WTC11 (cell line): ENCODE measurements at regions of chr19 and their contacts with region 1.

Region 1: DNA sequence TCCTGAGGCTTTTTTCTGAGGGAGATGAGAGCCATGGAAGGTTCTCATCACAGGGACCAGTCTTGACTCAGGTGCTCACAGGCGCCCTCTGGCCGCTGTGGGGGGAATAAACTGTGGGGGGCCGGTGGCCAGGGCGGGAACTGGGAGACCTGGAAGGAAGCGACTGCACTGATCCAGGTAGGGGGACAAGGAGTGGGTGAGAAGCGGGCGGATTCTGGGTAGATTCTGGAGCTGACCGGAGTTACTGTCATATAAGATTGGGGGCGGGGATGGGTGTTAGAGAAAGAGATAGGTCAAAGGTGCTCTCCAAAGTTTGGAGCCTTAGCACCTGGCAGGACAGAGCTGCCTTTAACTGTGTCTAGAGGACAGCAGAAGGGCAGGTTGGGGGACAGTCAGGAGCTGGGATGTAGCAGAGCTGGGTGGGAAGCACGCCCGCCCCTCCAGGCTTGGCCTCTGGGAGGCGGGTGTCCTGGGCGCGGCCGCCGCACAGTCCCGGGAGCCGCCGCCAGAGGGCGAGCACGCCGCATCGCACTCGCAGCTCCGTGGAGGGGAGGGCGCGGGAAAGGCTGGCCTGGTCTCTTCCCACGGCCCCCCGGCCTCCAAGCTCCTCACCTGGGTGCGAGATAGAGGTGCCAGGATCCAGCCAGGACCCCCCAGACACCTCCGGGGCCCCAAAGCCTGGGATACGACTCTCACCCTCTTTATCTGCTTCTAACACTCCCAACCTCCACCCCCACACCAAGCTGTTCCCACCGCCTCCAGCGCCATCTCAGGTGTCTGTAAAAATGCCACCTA is 4.2 kb upstream of the DAND5 start:
- DNase-seq: peak; percentile 91
- ATAC-seq: peak; percentile 95
- H3K4me3 Mint-ChIP-seq: peak overlapping the region; percentile 71
- H3K27ac Mint-ChIP-seq: peak overlapping the region; percentile 65
- H3K4me1 Mint-ChIP-seq: 0 out of 2 replicates have a peak, but pooled peaks cover 5% of the 10 kb centered on the region
- H3K27me3 Mint-ChIP-seq: peaks cover 14% of the 10 kb centered on the region
- CTCF ChIP-seq: peak; percentile 85

Region 2: GRCh38 chr19:12751635-12752034 is 213.6 kb before region 1 on chr19 and contains the start of gene BEST2:
- CTCF ChIA-PET with region 1: no interaction called
- POLR2A ChIA-PET with region 1: no interaction called
- DNase-seq: peak; percentile 61
- ATAC-seq: peak; percentile 74
- H3K4me3 Mint-ChIP-seq: peak within 1 kb of the TSS; percentile 69
- H3K27ac Mint-ChIP-seq: no peak within 1 kb of the TSS
- H3K4me1 Mint-ChIP-seq: peaks cover 13% of the 10 kb centered on the region
- H3K27me3 Mint-ChIP-seq: peaks cover 49% of the 10 kb centered on the region
- CTCF ChIP-seq: no peak
- total RNA-seq, gene BEST2: 3.3 to 4.7 TPM (median 4.1 TPM) in 3 replicates

Region 3: DNA sequence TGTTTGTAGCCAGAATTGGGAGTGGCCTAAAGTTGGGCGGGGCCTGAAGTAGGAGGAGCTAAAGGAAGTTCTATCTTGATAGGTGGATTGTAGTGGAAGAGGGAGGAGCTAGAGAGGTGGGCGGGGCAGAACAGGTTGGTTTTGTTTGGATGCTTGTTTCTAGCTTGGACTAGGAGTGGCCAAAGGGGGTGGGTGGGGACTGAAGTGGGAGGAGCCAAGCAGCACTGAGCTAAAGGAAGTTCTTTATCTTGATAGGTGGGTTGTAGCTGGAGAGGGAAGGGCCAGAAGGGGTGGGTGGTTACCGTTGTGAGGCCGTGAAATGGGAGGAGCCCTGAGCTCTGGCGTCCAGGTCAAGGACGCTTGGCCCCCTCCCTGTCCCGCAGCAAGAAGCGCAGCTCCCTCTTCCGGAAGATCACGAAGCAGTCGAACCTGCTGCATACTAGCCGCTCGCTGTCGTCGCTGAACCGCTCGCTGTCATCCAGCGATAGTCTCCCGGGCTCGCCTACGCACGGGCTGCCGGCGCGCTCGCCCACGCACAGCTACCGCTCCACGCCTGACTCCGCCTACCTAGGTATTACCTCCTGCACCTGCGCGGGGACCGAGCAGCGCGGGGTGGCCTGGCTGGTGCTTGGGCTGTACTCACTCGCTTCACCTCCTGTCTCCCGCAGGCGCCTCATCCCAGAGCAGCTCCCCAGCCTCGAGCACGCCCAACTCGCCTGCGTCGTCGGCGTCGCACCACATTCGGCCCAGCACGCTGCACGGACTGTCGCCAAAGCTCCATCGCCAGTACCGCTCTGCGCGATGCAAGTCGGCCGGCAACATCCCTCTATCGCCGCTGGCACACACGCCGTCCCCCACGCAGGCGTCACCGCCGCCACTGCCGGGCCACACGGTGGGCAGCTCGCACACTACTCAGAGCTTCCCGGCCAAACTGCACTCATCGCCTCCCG is 92.0 kb before region 1 on chr19:
- CTCF ChIA-PET with region 1: interaction called, 14 read pairs
- POLR2A ChIA-PET with region 1: no interaction called
- DNase-seq: peak; percentile 89
- ATAC-seq: peak; percentile 86
- H3K4me3 Mint-ChIP-seq: peak overlapping the region; percentile 67
- H3K27ac Mint-ChIP-seq: no peak overlapping the region
- H3K4me1 Mint-ChIP-seq: no peaks in the 10 kb centered on the region; the same call in 1 of the 2 replicates
- H3K27me3 Mint-ChIP-seq: peaks cover 30% of the 10 kb centered on the region
- CTCF ChIP-seq: no peak

Region 4: GRCh38 chr19:12918271-12918670 is 46.9 kb before region 1 on chr19:
- CTCF ChIA-PET with region 1: interaction called, 31 read pairs
- POLR2A ChIA-PET with region 1: no interaction called
- DNase-seq: no peak
- ATAC-seq: no peak
- H3K4me3 Mint-ChIP-seq: 0 out of 2 replicates have a peak overlapping the region, but pooled peaks have one; percentile 31
- H3K27ac Mint-ChIP-seq: no peak overlapping the region
- H3K4me1 Mint-ChIP-seq: peaks cover 13% of the 10 kb centered on the region
- H3K27me3 Mint-ChIP-seq: peaks cover 22% of the 10 kb centered on the region
- CTCF ChIP-seq: no peak

Region 5: DNA sequence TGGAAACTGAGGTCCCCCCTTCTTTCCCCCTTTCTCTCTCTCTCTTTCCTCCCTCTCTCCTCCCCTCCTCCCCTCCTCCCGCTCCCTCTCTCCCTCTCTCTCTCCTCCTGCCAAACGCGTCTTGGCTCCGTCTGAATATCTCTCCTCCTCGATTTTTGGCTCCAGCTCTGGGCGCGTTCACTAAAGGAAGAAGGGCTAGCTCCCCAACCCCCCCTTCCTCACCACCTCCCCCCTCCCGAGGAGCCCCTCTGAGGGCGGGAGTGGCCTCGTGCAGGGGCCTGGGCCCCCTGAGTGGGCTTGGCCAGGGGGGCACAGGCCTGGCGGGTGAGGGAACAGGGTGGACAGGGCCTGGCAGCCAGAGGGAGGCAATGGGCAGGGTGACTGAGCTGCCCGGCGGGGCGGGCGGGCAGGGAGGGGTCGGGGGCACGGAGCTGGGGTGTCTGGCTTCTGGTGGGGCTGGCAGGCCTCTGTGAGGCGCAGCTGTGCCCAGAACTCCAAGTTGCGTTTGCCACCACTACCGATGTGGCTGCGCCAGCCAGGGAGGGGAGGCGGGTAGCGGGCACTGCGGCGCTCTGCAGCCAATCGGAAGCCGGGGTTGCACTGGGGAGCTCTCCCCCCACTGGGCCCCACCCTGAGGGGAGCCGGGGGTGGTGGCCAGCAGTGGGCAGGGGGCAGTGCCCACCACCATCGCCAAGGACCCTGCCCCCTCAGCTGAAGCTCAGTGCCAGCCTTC is 37.1 kb after region 1 on chr19:
- CTCF ChIA-PET with region 1: interaction called, 14 read pairs
- POLR2A ChIA-PET with region 1: no interaction called
- DNase-seq: no peak
- ATAC-seq: no peak
- H3K4me3 Mint-ChIP-seq: no peak overlapping the region
- H3K27ac Mint-ChIP-seq: no peak overlapping the region
- H3K4me1 Mint-ChIP-seq: no peaks in the 10 kb centered on the region
- H3K27me3 Mint-ChIP-seq: peaks cover 88% of the 10 kb centered on the region
- CTCF ChIP-seq: no peak

Region 6: DNA sequence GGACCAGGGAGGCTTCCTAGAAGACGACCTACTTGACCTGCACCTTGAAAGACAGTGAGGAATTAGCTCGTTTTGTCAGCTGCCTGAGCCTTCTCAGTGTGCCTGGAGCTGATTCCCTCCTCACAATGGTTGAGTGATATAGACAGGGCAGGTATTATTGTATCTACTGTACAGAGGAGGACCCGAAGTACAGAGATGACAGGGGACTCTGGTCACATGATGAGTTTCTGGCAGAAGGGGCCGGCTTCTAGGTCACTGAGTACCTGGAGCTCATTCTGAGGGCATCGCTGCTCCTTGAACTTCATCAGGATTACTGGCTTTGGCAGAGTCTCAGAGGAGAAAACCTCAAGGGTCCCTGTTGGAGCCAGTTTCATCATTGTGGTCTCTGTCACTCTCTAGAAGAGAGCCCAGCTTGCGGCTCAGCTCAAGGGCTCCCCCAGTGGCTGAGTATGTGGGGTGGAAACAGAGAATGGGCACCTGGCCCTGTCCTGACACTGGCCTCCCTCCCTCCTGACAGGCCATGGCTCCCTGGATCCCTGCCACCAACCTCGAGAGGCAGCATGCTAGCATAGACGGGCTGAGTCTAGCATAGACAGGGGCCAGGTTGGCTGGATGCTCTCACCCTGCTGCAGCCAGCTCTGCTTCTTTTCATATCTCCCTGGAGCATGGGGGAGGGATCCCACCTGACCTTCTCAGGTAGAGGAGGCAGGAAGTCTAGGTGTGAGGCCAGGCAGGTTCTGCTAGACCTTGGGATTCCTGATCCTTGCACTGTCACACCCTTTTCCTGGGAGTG is 68.8 kb after region 1 on chr19:
- CTCF ChIA-PET with region 1: interaction called, 31 read pairs
- POLR2A ChIA-PET with region 1: no interaction called
- DNase-seq: peak; percentile 85
- ATAC-seq: peak; percentile 91
- H3K4me3 Mint-ChIP-seq: no peak overlapping the region
- H3K27ac Mint-ChIP-seq: no peak overlapping the region
- H3K4me1 Mint-ChIP-seq: peaks cover 8% of the 10 kb centered on the region
- H3K27me3 Mint-ChIP-seq: peaks cover 81% of the 10 kb centered on the region
- CTCF ChIP-seq: peak; percentile 53

Region 7: GRCh38 chr19:13069415-13070359 is 104.5 kb after region 1 on chr19:
- CTCF ChIA-PET with region 1: interaction called, 18 read pairs
- POLR2A ChIA-PET with region 1: no interaction called
- DNase-seq: no peak
- ATAC-seq: peak; percentile 34
- H3K4me3 Mint-ChIP-seq: no peak overlapping the region
- H3K27ac Mint-ChIP-seq: no peak overlapping the region
- H3K4me1 Mint-ChIP-seq: no peaks in the 10 kb centered on the region
- H3K27me3 Mint-ChIP-seq: peaks cover 6% of the 10 kb centered on the region
- CTCF ChIP-seq: no peak

Region 8: GRCh38 chr19:13117772-13118423 is 152.7 kb after region 1 on chr19 and contains the start of gene NACC1:
- CTCF ChIA-PET with region 1: interaction called, 14 read pairs
- POLR2A ChIA-PET with region 1: interaction called, 3 read pairs
- DNase-seq: peak; percentile 93
- ATAC-seq: peak; percentile 68
- H3K4me3 Mint-ChIP-seq: peak within 1 kb of the TSS; percentile 96
- H3K27ac Mint-ChIP-seq: peak within 1 kb of the TSS; percentile 98
- H3K4me1 Mint-ChIP-seq: peaks cover 52% of the 10 kb centered on the region
- H3K27me3 Mint-ChIP-seq: no peaks in the 10 kb centered on the region; the same call in 1 of the 2 replicates
- CTCF ChIP-seq: no peak
- total RNA-seq, gene NACC1: 212 to 237 TPM (median 213 TPM) in 3 replicates